ENCODE measurements at regions of chr17 and their contacts with region 1.

Region 1: GRCh38 chr17:7322520-7323194 is 6.5 kb downstream of the NEURL4 start:
- DNase-seq: no peak

Region 2: GRCh38 chr17:7484067-7484918 is 161.6 kb after region 1 on chr17 and contains the start of gene POLR2A:
- intact Hi-C with region 1: no loop called
- DNase-seq: peak; percentile 99
- total RNA-seq, gene POLR2A: 65.5 to 70.0 TPM

Region 3: GRCh38 chr17:7508190-7508589 is 185.5 kb after region 1 on chr17:
- intact Hi-C with region 1: loop called in 1 of 2 experiments (anchors 1 kb)
- DNase-seq: no peak